Activated naive CD4-positive, alpha-beta T cell treated with anti-CD3 and anti-CD28 coated beads, Interleukin-2, amount 10 ng/mL, durations not matched to agents 7 days and 5 days (primary cell): ENCODE measurements at regions of chr2 and their contacts with region 1.

Region 1: DNA sequence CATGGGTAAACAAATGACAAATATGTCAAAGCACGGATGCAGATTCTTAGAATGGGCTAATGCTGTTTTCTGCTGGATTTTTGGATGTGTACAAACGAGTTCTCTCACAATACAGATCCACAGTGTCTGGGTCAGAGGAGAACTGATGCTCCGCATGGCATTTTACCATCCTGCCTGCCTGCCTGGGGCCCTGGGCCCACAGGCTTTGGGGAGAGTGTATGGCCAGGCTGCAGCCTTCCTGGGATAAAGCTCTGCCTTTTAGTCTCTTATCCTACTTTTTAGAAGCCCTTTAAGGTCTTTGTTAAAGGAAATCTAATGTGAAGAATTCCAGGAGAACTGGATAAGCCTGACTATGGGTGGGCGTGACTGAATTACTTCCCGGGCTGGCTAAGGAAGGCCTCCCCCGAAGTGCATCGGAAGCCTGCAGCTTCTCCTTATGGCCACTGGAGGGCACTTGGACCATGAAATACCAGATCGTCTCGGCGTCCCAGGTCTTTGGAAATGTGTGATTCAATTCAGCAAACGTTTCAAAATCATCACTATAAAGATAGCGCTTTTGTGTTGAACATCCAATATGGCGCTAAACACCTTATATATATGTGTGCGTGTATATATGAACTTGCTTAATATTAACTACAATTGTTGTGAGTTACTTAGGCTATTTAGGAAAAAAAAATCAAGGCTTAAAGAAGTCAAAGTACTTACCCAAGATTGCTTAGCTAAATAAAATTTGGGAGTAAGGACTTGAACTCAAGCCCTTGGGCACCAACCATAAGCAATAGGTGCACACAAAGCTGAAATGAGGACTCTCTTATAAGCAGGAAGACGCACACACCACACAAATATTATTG is 15.2 kb upstream of the DNPEP start:
- DNase-seq: peak; percentile 67
- H3K4me3 Mint-ChIP-seq: no peak overlapping the region
- H3K27ac Mint-ChIP-seq: no peak overlapping the region
- H3K4me1 Mint-ChIP-seq: no peaks in the 10 kb centered on the region
- H3K27me3 Mint-ChIP-seq: peaks cover 40% of the 10 kb centered on the region

Region 2: DNA sequence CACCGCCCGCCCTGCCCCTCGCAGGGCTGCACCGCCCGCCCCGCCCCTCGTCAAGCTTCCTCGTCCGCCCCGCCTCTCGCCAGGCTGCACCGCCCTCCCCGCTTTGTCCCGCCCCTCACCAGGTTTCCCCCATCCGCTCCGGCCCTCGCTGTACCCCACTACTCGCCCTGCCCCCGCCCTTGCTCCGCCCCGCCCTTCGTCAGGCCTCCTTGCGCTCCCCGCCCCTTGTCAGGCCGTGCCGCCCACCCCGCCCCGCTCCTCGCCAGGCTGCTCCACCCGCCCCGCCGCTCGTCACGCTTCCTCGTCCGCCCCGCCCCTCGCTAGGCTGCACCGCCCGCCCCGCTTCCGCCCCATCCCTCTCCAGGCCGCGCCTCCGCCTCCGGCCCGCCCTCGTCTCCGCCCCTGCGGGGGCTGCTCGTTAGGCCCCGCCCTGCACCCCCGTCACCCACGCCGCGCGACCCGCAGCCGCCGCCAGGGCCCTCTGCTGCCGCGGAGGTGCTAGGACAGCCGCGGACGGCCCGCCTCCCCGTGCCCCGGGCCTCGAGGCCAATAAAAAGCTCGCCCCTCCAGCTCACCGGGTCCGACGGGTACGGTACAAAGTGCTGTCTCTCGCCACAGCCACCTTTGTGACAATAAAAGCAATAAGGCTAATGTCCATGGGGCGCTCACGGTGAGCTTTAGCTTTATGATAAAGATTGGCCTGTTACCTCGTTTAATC is 14.6 kb before region 1 on chr2:
- CTCF ChIA-PET with region 1: interaction called, 34 read pairs
- DNase-seq: peak; percentile 98
- H3K4me3 Mint-ChIP-seq: peak overlapping the region; percentile 96
- H3K27ac Mint-ChIP-seq: peak overlapping the region; percentile 87
- H3K4me1 Mint-ChIP-seq: peaks cover 21% of the 10 kb centered on the region
- H3K27me3 Mint-ChIP-seq: peaks cover 14% of the 10 kb centered on the region

Region 3: DNA sequence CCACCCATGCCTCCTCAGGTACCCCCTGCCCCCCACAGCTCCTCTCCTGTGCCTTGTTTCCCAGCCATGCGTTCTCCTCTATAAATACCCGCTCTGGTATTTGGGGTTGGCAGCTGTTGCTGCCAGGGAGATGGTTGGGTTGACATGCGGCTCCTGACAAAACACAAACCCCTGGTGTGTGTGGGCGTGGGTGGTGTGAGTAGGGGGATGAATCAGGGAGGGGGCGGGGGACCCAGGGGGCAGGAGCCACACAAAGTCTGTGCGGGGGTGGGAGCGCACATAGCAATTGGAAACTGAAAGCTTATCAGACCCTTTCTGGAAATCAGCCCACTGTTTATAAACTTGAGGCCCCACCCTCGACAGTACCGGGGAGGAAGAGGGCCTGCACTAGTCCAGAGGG is 14.5 kb after region 1 on chr2:
- CTCF ChIA-PET with region 1: interaction called, 15 read pairs
- DNase-seq: no peak
- H3K4me3 Mint-ChIP-seq: no peak overlapping the region
- H3K27ac Mint-ChIP-seq: no peak overlapping the region
- H3K4me1 Mint-ChIP-seq: peaks cover 4% of the 10 kb centered on the region
- H3K27me3 Mint-ChIP-seq: peaks cover 78% of the 10 kb centered on the region

Region 4: DNA sequence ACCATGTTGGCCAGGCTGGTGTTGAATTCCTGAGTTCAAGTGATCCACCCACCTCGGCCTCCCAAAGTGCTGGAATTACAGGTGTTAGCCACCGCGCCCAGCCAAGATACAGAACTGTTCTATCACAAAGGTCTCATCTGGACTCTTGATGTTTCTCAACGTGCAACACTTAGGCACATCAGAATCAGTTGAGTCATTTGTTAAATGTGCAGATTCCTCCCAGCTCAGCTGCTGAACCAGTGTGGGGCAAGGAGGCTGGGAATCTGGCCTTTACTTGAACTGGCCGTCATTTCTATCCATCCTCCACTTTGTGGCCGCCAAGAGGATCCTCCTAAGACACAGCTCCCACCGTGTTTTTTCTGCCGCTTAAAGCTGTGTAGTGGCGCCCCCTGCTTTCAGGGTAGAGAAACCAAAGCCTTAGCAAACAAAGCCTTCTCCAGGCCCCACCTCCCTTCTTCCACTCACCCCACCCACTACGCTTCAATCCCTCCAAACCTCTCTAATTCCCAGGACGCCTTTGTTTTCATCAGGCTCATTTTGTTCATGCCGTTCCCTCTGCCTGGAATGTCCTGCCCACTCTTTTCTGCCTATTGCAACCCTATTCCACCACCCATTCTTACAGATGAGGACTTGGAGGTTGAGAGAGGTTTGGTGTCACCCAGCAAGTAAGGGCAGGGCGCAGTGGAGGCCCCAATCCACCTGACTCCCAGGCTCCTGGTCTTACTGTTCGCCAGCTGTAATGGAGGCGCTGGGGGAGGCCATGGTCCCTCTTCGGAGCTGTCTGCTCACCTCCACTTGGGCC is 31.0 kb after region 1 on chr2:
- CTCF ChIA-PET with region 1: interaction called, 31 read pairs
- DNase-seq: peak; percentile 50
- H3K4me3 Mint-ChIP-seq: no peak overlapping the region
- H3K27ac Mint-ChIP-seq: no peak overlapping the region
- H3K4me1 Mint-ChIP-seq: no peaks in the 10 kb centered on the region
- H3K27me3 Mint-ChIP-seq: peaks cover 30% of the 10 kb centered on the region

Region 5: GRCh38 chr2:219459460-219460311 is 56.8 kb after region 1 on chr2:
- CTCF ChIA-PET with region 1: interaction called, 15 read pairs
- DNase-seq: peak; percentile 49
- H3K4me3 Mint-ChIP-seq: no peak overlapping the region
- H3K27ac Mint-ChIP-seq: no peak overlapping the region
- H3K4me1 Mint-ChIP-seq: peaks cover 3% of the 10 kb centered on the region
- H3K27me3 Mint-ChIP-seq: peaks cover 8% of the 10 kb centered on the region